CD4-positive, alpha-beta T cell (primary cell): ENCODE measurements at regions of chr9 and their contacts with region 1.

Region 1: GRCh38 chr9:80004714-80005113 is 432.9 kb downstream of the TLE4 start:
- DNase-seq: no peak
- ATAC-seq: no peak
- H3K4me3 ChIP-seq: no peak overlapping the region
- H3K4me3 Mint-ChIP-seq: no peak overlapping the region
- H3K27ac ChIP-seq: no peak overlapping the region
- H3K27ac Mint-ChIP-seq: no peak overlapping the region
- H3K4me1 ChIP-seq: no peaks in the 10 kb centered on the region
- H3K4me1 Mint-ChIP-seq: no peaks in the 10 kb centered on the region
- H3K27me3 ChIP-seq: no peaks in the 10 kb centered on the region
- H3K27me3 Mint-ChIP-seq: no peaks in the 10 kb centered on the region
- CTCF ChIP-seq: no peak

Region 2: GRCh38 chr9:79955300-79955699 is 49.4 kb before region 1 on chr9:
- CTCF ChIA-PET with region 1: no interaction called
- POLR2A ChIA-PET with region 1: no interaction called
- intact Hi-C with region 1: loop called in 1 of 2 experiments (anchors 5 kb)
- DNase-seq: peak in 2 of 14 experiments; percentile 5 to 16
- ATAC-seq: no peak
- H3K4me3 ChIP-seq: no peak overlapping the region
- H3K4me3 Mint-ChIP-seq: no peak overlapping the region
- H3K27ac ChIP-seq: no peak overlapping the region
- H3K27ac Mint-ChIP-seq: no peak overlapping the region
- H3K4me1 ChIP-seq: no peaks in the 10 kb centered on the region
- H3K4me1 Mint-ChIP-seq: no peaks in the 10 kb centered on the region
- H3K27me3 ChIP-seq: no peaks in the 10 kb centered on the region
- H3K27me3 Mint-ChIP-seq: peaks cover 4% of the 10 kb centered on the region
- CTCF ChIP-seq: no peak

Region 3: GRCh38 chr9:79974806-79975422 is 29.8 kb before region 1 on chr9:
- CTCF ChIA-PET with region 1: no interaction called
- POLR2A ChIA-PET with region 1: no interaction called
- intact Hi-C with region 1: loop called in 1 of 2 experiments (anchors 5 kb)
- DNase-seq: no peak
- ATAC-seq: no peak
- H3K4me3 ChIP-seq: no peak overlapping the region
- H3K4me3 Mint-ChIP-seq: no peak overlapping the region
- H3K27ac ChIP-seq: no peak overlapping the region
- H3K27ac Mint-ChIP-seq: no peak overlapping the region
- H3K4me1 ChIP-seq: no peaks in the 10 kb centered on the region
- H3K4me1 Mint-ChIP-seq: no peaks in the 10 kb centered on the region
- H3K27me3 ChIP-seq: no peaks in the 10 kb centered on the region
- H3K27me3 Mint-ChIP-seq: peaks cover 21% of the 10 kb centered on the region
- CTCF ChIP-seq: no peak